Spleen (tissue), 13 donors: ENCODE measurements at regions of chr4 and their contacts with region 1.

Region 1: GRCh38 chr4:15729910-15730533 is 27.2 kb downstream of the BST1 start:
- DNase-seq: no peak
- H3K4me3 ChIP-seq: no peak overlapping the region
- H3K27ac ChIP-seq: no peak overlapping the region
- H3K4me1 ChIP-seq: peaks cover 0 to 14% (median 0%) of the 10 kb centered on the region in 6 donors
- H3K27me3 ChIP-seq: no peaks in the 10 kb centered on the region
- CTCF ChIP-seq: peak; percentile 76 to 92 (median 87)
- POLR2A ChIP-seq: no peak

Region 2: DNA sequence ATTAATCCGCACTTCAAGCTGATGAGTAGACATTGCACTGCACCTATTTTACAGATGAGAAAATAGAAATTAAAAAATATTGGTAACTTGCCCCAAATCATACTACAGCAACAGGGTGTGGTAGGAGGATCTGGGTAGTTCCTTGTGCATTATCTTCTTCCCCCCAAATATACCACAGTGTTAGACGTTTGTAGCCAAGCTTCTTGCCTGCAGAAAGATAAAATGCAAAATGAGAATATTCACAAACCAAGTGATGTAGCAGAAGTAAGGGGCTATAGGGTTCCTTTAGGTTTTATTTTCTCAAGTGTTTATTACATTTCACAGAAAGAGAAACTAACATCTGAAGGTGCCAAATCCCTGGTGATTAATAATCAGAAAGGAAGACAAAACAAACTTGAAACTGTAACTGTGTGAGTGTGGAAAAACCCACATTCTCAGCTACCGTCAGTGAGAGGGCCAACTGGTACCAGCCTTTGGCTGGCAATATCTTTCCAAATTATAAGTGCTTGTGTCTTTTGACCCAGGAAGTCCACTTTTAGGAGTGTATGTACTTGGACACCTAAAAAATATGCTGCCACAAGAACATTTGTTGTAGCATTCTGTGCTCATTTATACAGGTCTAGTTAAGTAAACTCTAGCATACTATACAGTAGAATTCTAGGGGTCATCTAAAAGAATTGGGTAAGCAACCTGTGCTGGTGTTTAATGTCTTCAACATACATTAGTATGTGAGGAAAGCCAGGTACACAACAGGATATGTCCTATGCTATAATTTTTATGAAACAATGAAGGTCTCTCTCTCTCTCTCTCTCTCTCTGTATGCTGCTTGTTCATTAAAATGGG is 41.4 kb after region 1 on chr4:
- intact Hi-C with region 1: no loop called
- DNase-seq: no peak
- H3K4me3 ChIP-seq: no peak overlapping the region
- H3K27ac ChIP-seq: peak overlapping the region in 3 of 8 donors; percentile 40 to 47 (median 42)
- H3K4me1 ChIP-seq: peaks cover 0 to 46% (median 15%) of the 10 kb centered on the region in 6 donors
- H3K27me3 ChIP-seq: no peaks in the 10 kb centered on the region
- CTCF ChIP-seq: no peak
- POLR2A ChIP-seq: no peak

Region 3: GRCh38 chr4:15805583-15806517 is 75.8 kb after region 1 on chr4:
- intact Hi-C with region 1: loop called (anchors 10 kb)
- DNase-seq: no peak
- H3K4me3 ChIP-seq: no peak overlapping the region
- H3K27ac ChIP-seq: peak overlapping the region in 1 of 8 donors; percentile 41
- H3K4me1 ChIP-seq: peaks cover 8 to 63% (median 40%) of the 10 kb centered on the region in 6 donors
- H3K27me3 ChIP-seq: no peaks in the 10 kb centered on the region
- CTCF ChIP-seq: peak; percentile 58 to 76 (median 69)
- POLR2A ChIP-seq: no peak

Region 4: DNA sequence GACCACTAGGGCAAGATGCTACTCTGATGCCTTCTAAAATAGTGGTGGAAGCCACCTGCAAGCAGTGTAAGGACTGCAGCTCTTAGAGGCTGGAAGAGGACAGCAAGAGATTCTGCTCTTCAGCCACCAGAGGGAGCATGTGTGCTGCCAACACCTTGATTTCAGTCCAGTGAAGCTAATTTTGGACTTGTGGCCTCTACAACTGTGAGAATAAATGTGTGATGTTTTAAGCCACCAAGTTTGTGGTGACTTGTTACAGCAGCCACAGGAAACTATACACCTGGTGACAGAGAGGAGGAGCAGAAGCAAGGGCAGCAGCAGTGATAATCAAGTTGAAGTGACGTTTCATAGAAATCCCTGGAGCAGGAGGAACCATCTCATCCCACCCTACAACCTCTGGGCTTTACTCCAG is 152.7 kb after region 1 on chr4:
- intact Hi-C with region 1: loop called (anchors 5 kb)
- DNase-seq: no peak
- H3K4me3 ChIP-seq: no peak overlapping the region
- H3K27ac ChIP-seq: no peak overlapping the region
- H3K4me1 ChIP-seq: peaks cover 0 to 4% (median 0%) of the 10 kb centered on the region in 6 donors
- H3K27me3 ChIP-seq: no peaks in the 10 kb centered on the region
- CTCF ChIP-seq: peak; percentile 56 to 94 (median 82)
- POLR2A ChIP-seq: no peak

Region 5: GRCh38 chr4:15956179-15956850 is 226.3 kb after region 1 on chr4:
- intact Hi-C with region 1: loop called (anchors 5 kb)
- DNase-seq: peak; percentile 88
- H3K4me3 ChIP-seq: no peak overlapping the region
- H3K27ac ChIP-seq: no peak overlapping the region
- H3K4me1 ChIP-seq: peaks cover 0 to 11% (median 2%) of the 10 kb centered on the region in 6 donors
- H3K27me3 ChIP-seq: no peaks in the 10 kb centered on the region
- CTCF ChIP-seq: peak; percentile 65 to 96 (median 84)
- POLR2A ChIP-seq: no peak

Region 6: GRCh38 chr4:16001484-16001858 is 271.4 kb after region 1 on chr4:
- intact Hi-C with region 1: loop called (anchors 10 kb)
- DNase-seq: no peak
- H3K4me3 ChIP-seq: no peak overlapping the region
- H3K27ac ChIP-seq: no peak overlapping the region
- H3K4me1 ChIP-seq: peaks cover 0 to 7% (median 1%) of the 10 kb centered on the region in 6 donors
- H3K27me3 ChIP-seq: peaks cover 0 to 9% (median 0%) of the 10 kb centered on the region in 7 donors
- CTCF ChIP-seq: peak; percentile 72 to 94 (median 89)
- POLR2A ChIP-seq: no peak